PC-3 (cell line): ENCODE measurements at regions of chr7 and their contacts with region 1.

Region 1: GRCh38 chr7:28155019-28155660 is 25.5 kb downstream of the JAZF1 start:
- DNase-seq: peak; percentile 19
- ATAC-seq: peak; percentile 78
- H3K4me3 ChIP-seq: no peak overlapping the region
- H3K27ac ChIP-seq: peak overlapping the region; percentile 25; the same call in 1 of the 2 replicates
- H3K4me1 ChIP-seq: peaks cover 34% of the 10 kb centered on the region
- H3K27me3 ChIP-seq: no peaks in the 10 kb centered on the region
- CTCF ChIP-seq: no peak

Region 2: DNA sequence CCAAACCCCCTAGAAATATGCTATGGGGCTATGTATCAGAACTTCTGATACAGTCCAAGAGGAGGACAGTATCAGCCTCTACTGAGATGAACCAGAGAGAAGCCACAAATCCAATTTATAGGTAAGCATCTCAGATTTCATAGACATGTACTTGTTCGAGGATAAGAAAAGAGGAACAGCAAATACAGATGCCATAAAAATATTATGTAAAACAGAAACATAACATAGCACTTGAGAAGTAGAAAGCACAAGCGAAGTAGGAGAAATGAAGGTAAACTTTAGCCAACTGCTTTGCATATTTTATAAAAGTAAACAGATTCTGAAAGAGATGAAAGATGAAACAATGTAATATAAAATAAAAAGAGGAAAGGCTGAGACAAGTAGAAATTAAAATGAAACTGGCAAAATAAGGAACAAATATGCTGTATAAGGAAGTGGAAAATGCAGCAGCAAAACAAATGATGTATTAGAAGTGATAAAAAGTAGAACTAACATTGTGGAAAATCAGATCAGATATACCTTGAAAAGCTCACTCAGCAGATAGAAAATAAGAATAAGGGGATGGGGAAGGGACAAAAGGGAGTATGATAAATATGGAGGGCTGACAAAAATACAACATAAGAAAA is 1425.9 kb before region 1 on chr7:
- CTCF ChIA-PET with region 1: no interaction called
- POLR2A ChIA-PET with region 1: no interaction called
- intact Hi-C with region 1: no loop called
- DNase-seq: no peak
- ATAC-seq: 0 out of 2 replicates have a peak, but pooled peaks have one; percentile 15
- H3K4me3 ChIP-seq: no peak overlapping the region
- H3K27ac ChIP-seq: no peak overlapping the region
- H3K4me1 ChIP-seq: no peaks in the 10 kb centered on the region
- H3K27me3 ChIP-seq: no peaks in the 10 kb centered on the region
- CTCF ChIP-seq: no peak

Region 3: GRCh38 chr7:28062197-28062991 is 92.7 kb before region 1 on chr7:
- CTCF ChIA-PET with region 1: no interaction called
- POLR2A ChIA-PET with region 1: no interaction called
- intact Hi-C with region 1: no loop called
- DNase-seq: peak; percentile 73
- ATAC-seq: peak; percentile 89
- H3K4me3 ChIP-seq: peak overlapping the region; percentile 9; the same call in 1 of the 2 replicates
- H3K27ac ChIP-seq: peak overlapping the region; percentile 63
- H3K4me1 ChIP-seq: peaks cover 29% of the 10 kb centered on the region
- H3K27me3 ChIP-seq: no peaks in the 10 kb centered on the region
- CTCF ChIP-seq: peak; percentile 85

Region 4: GRCh38 chr7:28106321-28106829 is 48.8 kb before region 1 on chr7:
- CTCF ChIA-PET with region 1: no interaction called
- POLR2A ChIA-PET with region 1: no interaction called
- intact Hi-C with region 1: loop called (anchors 5 kb)
- DNase-seq: no peak
- ATAC-seq: no peak
- H3K4me3 ChIP-seq: no peak overlapping the region
- H3K27ac ChIP-seq: no peak overlapping the region
- H3K4me1 ChIP-seq: peaks cover 39% of the 10 kb centered on the region
- H3K27me3 ChIP-seq: no peaks in the 10 kb centered on the region
- CTCF ChIP-seq: no peak

Region 5: DNA sequence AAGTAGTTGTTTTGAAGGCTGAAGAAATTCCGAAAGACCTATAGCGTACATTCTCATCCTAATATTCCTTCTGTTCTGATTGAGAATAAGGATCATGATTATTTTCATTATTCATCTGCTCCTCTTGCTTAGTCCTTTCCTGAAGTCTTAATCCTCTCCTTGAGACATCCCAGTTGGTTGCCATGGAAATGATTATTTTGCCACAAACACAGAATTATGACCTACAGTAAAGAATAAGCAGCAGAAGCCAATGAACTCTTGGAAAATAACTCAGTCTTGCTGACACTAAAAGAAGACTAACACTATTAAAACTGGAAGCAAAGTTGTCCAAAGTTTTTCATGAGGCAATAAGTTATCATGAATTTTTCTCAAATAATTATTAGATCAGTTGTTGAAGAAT is 73.3 kb after region 1 on chr7:
- CTCF ChIA-PET with region 1: no interaction called
- POLR2A ChIA-PET with region 1: no interaction called
- intact Hi-C with region 1: no loop called
- DNase-seq: no peak
- ATAC-seq: no peak
- H3K4me3 ChIP-seq: no peak overlapping the region
- H3K27ac ChIP-seq: no peak overlapping the region
- H3K4me1 ChIP-seq: no peaks in the 10 kb centered on the region; the same call in 1 of the 2 replicates
- H3K27me3 ChIP-seq: no peaks in the 10 kb centered on the region
- CTCF ChIP-seq: no peak